ENCODE measurements at regions of chr9 and their contacts with region 1.

Region 1: DNA sequence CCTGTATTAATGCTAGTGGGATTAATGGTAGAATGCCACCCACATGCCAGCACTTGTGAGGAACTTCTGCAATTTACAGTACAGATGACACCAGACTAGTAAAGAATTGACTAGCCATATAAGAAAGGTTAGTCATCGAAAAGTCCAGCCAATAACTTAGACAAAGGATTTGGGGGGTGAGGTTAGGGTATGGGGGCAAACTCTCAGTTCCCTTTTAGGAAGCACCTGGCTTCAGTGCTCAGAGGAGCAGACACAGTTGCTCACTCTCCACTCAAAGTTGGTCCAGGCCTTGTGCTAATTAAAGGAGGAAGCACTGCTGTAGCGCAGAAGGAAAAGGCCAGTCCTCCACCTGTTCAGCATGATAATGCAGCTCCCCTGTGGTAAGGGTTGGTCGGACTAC is 25.2 kb downstream of the TGFBR1 start:
- DNase-seq: no peak
- ATAC-seq: no peak
- H3K4me3 ChIP-seq: no peak overlapping the region
- H3K4me3 Mint-ChIP-seq: peak overlapping the region; percentile 38
- H3K27ac ChIP-seq: peak overlapping the region in 1 of 2 experiments; percentile 38
- H3K27ac Mint-ChIP-seq: peak overlapping the region; percentile 85
- H3K4me1 ChIP-seq: peaks cover 88% of the 10 kb centered on the region
- H3K4me1 Mint-ChIP-seq: peaks cover 86% of the 10 kb centered on the region
- H3K27me3 ChIP-seq: no peaks in the 10 kb centered on the region
- H3K27me3 Mint-ChIP-seq: no peaks in the 10 kb centered on the region
- CTCF ChIP-seq: no peak

Region 2: GRCh38 chr9:98974994-98975712 is 154.9 kb before region 1 on chr9:
- CTCF ChIA-PET with region 1: interaction called, 12 read pairs
- POLR2A ChIA-PET with region 1: interaction called, 3 read pairs
- intact Hi-C with region 1: no loop called
- DNase-seq: peak; percentile 66 to 88 (median 81)
- ATAC-seq: peak; percentile 99
- H3K4me3 ChIP-seq: peak overlapping the region; percentile 33
- H3K4me3 Mint-ChIP-seq: peak overlapping the region; percentile 67
- H3K27ac ChIP-seq: no peak overlapping the region
- H3K27ac Mint-ChIP-seq: no peak overlapping the region
- H3K4me1 ChIP-seq: peaks cover 18% of the 10 kb centered on the region
- H3K4me1 Mint-ChIP-seq: peaks cover 6% of the 10 kb centered on the region
- H3K27me3 ChIP-seq: peaks cover 0 to 7% of the 10 kb centered on the region in 2 experiments
- H3K27me3 Mint-ChIP-seq: peaks cover 7% of the 10 kb centered on the region
- CTCF ChIP-seq: peak; percentile 97

Region 3: GRCh38 chr9:99040911-99041582 is 89.0 kb before region 1 on chr9:
- CTCF ChIA-PET with region 1: no interaction called
- POLR2A ChIA-PET with region 1: no interaction called
- intact Hi-C with region 1: no loop called
- DNase-seq: peak in 2 of 9 experiments; percentile 18 to 27
- ATAC-seq: no peak
- H3K4me3 ChIP-seq: no peak overlapping the region
- H3K4me3 Mint-ChIP-seq: no peak overlapping the region
- H3K27ac ChIP-seq: peak overlapping the region in 1 of 2 experiments; percentile 20
- H3K27ac Mint-ChIP-seq: no peak overlapping the region
- H3K4me1 ChIP-seq: peaks cover 5% of the 10 kb centered on the region
- H3K4me1 Mint-ChIP-seq: peaks cover 18% of the 10 kb centered on the region
- H3K27me3 ChIP-seq: no peaks in the 10 kb centered on the region
- H3K27me3 Mint-ChIP-seq: peaks cover 2% of the 10 kb centered on the region
- CTCF ChIP-seq: no peak

Region 4: DNA sequence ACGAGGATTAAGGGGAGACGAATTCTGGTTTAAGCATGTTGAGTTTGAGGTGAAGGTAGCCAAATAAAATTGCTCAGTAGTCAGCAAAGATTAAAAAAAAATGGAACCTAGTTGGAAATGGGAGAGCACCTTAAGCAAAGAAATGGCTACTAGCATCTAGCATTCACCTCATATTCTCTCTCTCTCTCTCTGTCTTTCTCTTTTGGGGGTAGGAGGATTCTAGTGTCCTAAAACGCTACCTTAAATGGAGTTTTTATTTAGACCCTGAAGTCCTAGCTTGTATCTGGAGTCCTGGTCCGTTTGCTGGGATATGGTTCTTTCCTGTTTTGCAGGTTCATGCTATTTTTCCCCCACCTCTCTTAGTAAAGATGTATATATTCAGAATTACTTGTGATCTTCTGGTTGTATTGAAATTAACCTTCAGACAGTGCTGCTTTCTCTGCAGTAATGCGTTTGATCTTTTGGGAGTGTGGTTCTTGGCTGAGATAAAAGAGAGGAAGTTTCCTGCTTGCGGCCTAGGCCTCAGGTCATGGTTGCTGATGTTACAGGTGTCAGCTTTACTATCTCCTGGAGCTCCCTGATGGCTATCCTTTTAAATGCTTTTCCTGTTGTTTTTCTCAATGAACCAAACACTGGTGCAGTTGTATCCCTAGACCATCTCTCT is 17.2 kb before region 1 on chr9:
- CTCF ChIA-PET with region 1: interaction called, 14 read pairs
- POLR2A ChIA-PET with region 1: interaction called, 47 read pairs
- intact Hi-C with region 1: loop called (anchors 1 to 2 kb)
- DNase-seq: peak in 5 of 9 experiments; percentile 45 to 87 (median 69)
- ATAC-seq: peak; percentile 92
- H3K4me3 ChIP-seq: peak overlapping the region in 1 of 2 experiments; percentile 10
- H3K4me3 Mint-ChIP-seq: peak overlapping the region; percentile 66
- H3K27ac ChIP-seq: peak overlapping the region; percentile 6 to 41
- H3K27ac Mint-ChIP-seq: peak overlapping the region; percentile 88
- H3K4me1 ChIP-seq: peaks cover 85% of the 10 kb centered on the region
- H3K4me1 Mint-ChIP-seq: peaks cover 93% of the 10 kb centered on the region
- H3K27me3 ChIP-seq: no peaks in the 10 kb centered on the region
- H3K27me3 Mint-ChIP-seq: no peaks in the 10 kb centered on the region
- CTCF ChIP-seq: no peak

Region 5: DNA sequence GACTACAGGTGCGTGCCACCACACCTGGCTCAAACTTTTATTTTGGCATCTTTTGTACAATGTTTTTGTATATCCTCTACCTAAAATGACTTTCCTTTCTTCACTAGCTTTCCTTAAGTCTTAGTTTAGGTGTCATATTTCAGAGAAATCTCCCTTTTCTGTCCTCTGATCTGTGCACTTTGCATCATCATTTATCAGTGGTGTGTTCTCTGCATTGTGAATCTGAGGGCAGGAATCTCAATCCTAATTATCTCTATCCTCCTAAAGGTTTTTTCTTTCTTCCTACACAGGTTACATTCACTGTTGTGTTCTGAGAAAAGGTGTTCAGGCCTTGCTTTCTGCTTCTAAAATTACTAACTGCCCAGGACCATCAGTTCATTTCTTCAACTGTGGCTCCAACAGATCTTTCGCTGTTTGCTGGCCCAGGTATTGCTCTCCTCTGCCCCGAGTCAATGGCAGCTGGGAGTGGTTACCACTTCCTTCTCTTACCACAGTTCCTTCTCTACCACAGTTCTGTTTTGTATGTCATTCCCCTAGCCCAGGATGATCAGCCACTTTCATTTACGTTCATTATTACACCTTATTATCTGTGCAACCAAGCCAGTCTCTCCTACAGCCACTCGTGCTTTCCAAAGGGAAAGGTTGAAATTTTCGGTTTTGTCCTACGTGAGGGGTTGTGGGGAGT is 11.1 kb before region 1 on chr9:
- CTCF ChIA-PET with region 1: interaction called, 14 read pairs
- POLR2A ChIA-PET with region 1: interaction called, 15 read pairs
- intact Hi-C with region 1: loop called (anchors 1 to 2 kb)
- DNase-seq: peak in 8 of 9 experiments; percentile 32 to 83 (median 62)
- ATAC-seq: peak; percentile 96
- H3K4me3 ChIP-seq: peak overlapping the region; percentile 15 to 36
- H3K4me3 Mint-ChIP-seq: peak overlapping the region; percentile 61
- H3K27ac ChIP-seq: peak overlapping the region; percentile 28 to 38
- H3K27ac Mint-ChIP-seq: peak overlapping the region; percentile 83
- H3K4me1 ChIP-seq: peaks cover 86% of the 10 kb centered on the region
- H3K4me1 Mint-ChIP-seq: peaks cover 91% of the 10 kb centered on the region
- H3K27me3 ChIP-seq: no peaks in the 10 kb centered on the region
- H3K27me3 Mint-ChIP-seq: no peaks in the 10 kb centered on the region
- CTCF ChIP-seq: no peak

Region 6: DNA sequence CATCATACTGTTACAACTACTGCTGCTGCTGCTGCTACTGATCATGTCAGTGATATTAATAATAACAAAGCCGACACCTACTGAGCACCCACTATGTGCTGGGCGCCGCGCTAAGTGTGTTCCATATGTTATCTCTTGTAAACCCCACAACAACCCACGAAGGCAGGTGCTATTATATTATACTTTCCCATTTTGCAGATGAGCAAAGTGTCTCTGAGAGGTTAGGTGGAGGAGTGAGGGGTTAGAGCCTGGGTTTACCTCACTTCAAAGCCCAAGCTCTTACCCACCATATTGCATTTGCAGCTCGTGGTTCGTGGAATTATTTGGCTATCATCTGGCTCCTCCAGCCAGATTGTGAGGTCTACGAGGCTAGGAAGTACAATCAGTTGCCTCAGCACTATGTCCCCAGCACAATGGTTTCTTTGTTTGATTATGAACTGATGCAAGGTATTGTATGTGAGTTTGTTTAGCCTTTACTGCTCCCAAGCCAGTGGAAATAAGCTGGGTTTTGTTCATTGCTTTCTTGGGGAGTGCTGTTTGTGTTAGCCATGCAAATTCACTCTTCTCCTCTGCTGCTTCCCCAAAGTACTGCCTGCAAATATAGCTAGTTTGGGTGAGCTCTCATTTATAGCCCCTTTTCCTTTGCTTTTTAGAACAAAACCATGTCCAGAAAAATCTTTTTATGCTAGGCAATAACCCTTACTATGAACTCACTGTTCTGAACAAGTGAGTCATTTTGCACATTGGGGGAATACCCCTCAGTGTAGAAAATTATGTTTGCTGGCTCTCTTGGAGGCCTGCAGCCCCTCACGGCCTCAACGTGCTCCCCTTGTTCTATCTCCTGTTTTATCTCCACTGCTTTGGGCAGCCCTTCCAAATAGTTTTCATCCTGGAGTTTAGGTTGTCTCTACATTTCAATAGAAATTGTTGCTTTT is 43.8 kb after region 1 on chr9:
- CTCF ChIA-PET with region 1: no interaction called
- POLR2A ChIA-PET with region 1: no interaction called
- intact Hi-C with region 1: no loop called
- DNase-seq: no peak
- ATAC-seq: no peak
- H3K4me3 ChIP-seq: no peak overlapping the region
- H3K4me3 Mint-ChIP-seq: no peak overlapping the region
- H3K27ac ChIP-seq: no peak overlapping the region
- H3K27ac Mint-ChIP-seq: no peak overlapping the region
- H3K4me1 ChIP-seq: no peaks in the 10 kb centered on the region
- H3K4me1 Mint-ChIP-seq: no peaks in the 10 kb centered on the region
- H3K27me3 ChIP-seq: no peaks in the 10 kb centered on the region
- H3K27me3 Mint-ChIP-seq: no peaks in the 10 kb centered on the region
- CTCF ChIP-seq: no peak

Measured in CD8-positive, alpha-beta T cell (primary cell).